Activated naive CD4-positive, alpha-beta T cell treated with anti-CD3 and anti-CD28 coated beads for 36 hours (primary cell): ENCODE measurements at regions of chr11 and their contacts with region 1.

Region 1: DNA sequence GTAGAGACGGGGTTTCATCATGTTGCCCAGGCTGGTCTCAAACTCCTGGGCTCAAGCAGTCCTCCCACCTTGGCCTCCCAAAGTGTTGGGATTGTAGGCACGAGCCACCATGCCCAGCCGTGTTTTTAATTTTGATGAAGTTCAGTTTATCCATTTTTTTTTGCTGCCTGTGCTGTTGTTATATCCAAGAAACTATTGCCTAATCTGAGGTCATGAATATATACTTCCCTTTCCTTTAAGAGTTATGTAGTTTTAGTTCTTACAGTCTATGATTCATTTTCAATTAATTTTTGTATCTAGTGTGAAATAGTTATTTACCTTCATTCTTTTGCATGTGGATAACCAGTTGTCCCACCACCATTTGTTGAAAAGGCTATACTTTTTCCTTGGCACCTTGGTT is 50.3 kb upstream of the SORL1-AS1 start:
- DNase-seq: no peak
- H3K4me3 Mint-ChIP-seq: no peak overlapping the region
- H3K27ac Mint-ChIP-seq: no peak overlapping the region
- H3K4me1 Mint-ChIP-seq: peaks cover 38% of the 10 kb centered on the region
- H3K27me3 Mint-ChIP-seq: no peaks in the 10 kb centered on the region

Region 2: DNA sequence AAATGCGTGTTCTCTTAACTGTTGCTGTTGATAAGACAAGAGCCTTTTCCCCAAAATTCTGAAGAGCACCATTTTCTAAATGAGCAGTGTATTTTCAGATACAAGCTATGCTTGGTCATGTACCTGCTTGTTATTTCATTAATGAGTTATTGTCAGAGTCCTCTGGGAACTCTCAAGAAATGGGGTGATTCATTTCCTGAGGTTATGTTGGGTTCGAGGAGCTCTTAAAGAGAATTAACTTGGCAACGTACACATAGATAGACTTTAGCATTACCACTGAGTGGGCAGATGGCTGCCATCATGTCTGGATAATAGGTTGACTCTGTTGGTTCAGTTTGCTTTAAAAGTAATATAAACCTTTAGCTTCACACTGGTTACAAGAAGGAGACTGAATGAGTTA is 37.6 kb after region 1 on chr11:
- CTCF ChIA-PET with region 1: no interaction called
- intact Hi-C with region 1: loop called (anchors 2 kb)
- DNase-seq: no peak
- H3K4me3 Mint-ChIP-seq: no peak overlapping the region
- H3K27ac Mint-ChIP-seq: peak overlapping the region; percentile 33
- H3K4me1 Mint-ChIP-seq: peaks cover 70% of the 10 kb centered on the region
- H3K27me3 Mint-ChIP-seq: no peaks in the 10 kb centered on the region